ENCODE measurements at regions of chr2 and their contacts with region 1.

Region 1: DNA sequence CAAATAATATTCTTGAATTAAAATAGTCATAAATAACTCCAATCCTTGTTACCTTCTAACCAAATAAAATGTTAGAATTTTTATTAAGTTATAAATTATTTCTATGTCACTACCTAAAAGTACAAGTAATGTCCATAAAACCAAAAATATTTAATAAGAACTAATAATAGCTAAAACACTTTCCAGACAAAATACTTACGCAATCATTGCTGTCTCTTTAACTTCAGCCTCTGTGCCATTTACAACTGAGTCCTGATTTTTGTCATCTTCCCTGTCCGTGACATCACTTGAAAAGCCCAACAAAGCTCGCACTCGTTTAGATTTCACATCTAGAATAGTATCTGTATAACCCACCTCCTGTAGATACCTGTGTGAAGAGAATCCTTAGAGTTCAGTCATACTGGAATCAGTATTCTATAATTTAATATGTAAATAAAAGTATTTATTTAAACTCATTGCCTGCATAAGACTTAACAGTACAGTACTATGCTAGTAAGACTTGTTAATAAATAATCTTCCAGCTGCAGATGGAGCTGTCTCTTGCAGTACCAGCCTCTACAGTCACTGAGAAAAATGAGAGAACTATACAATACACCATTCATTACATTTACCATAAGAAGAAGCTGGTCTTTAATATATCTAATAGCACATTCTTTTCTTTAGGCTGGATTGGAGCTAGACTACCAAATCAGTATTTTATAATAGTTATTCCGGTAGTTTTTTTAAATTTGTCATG is 63.8 kb downstream of the STRN start:
- DNase-seq: no peak
- ATAC-seq: peak in 2 of 4 donors; percentile 49 to 69
- H3K4me3 ChIP-seq: no peak overlapping the region
- H3K27ac ChIP-seq: peak overlapping the region in 2 of 12 donors; percentile 1 to 15
- H3K4me1 ChIP-seq: no peaks in the 10 kb centered on the region
- H3K27me3 ChIP-seq: no peaks in the 10 kb centered on the region
- CTCF ChIP-seq: peak in 1 of 12 donors; percentile 8
- POLR2A ChIP-seq: no peak

Region 2: DNA sequence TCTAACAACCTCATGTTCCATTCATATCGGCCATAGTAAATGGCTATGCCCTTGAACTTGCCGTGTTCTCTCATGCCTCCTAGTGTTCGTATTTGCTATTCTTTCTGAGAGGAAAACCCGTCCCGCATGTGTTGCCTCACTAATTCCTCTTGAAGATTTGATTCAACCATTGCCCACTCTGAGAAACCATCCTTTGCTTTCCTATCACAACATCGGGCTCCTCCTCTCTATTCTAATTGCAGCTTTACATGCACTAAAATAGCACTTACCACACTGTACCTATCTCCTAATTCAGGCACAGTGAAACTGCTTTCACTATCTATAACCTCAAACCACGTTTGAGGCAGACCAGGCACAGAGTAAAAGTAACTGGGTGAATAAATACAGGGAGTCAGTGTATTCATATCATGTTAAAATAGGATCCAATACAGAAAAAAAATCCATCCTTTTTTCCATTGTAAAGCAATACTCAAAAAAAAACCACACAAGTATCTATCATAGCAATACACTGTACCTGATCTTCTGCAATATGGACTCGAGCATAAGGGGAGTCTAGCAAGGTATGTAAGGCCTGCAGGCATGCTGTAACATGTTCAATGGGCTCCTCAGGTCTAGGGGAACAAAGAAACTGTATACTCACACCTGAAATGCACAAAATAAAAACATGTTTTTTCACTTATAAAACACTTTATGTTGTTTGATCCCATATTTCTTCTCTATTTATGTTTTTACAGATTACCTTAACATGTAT is 102.7 kb after region 1 on chr2:
- intact Hi-C with region 1: loop called in 1 of 10 experiments (anchors 10 kb)
- DNase-seq: no peak
- ATAC-seq: peak; percentile 87 to 95 (median 91)
- H3K4me3 ChIP-seq: no peak overlapping the region
- H3K27ac ChIP-seq: peak overlapping the region in 11 of 12 donors; percentile 13 to 80 (median 61)
- H3K4me1 ChIP-seq: peaks cover 0 to 22% (median 0%) of the 10 kb centered on the region in 12 donors
- H3K27me3 ChIP-seq: no peaks in the 10 kb centered on the region
- CTCF ChIP-seq: peak in 10 of 12 donors; percentile 19 to 63 (median 44)
- POLR2A ChIP-seq: no peak

Measured in heart left ventricle (tissue), 16 donors.